IMR-90 (cell line): ENCODE measurements at regions of chr20 and their contacts with region 1.

Region 1: GRCh38 chr20:39326050-39326449 is 363.9 kb downstream of the DHX35 start:
- DNase-seq: no peak
- ATAC-seq: no peak
- H3K4me3 ChIP-seq: no peak overlapping the region
- H3K27ac ChIP-seq: no peak overlapping the region
- H3K4me1 ChIP-seq: no peaks in the 10 kb centered on the region
- H3K27me3 ChIP-seq: no peaks in the 10 kb centered on the region
- CTCF ChIP-seq: no peak
- POLR2A ChIP-seq: no peak
- RAD21 ChIP-seq: no peak

Region 2: DNA sequence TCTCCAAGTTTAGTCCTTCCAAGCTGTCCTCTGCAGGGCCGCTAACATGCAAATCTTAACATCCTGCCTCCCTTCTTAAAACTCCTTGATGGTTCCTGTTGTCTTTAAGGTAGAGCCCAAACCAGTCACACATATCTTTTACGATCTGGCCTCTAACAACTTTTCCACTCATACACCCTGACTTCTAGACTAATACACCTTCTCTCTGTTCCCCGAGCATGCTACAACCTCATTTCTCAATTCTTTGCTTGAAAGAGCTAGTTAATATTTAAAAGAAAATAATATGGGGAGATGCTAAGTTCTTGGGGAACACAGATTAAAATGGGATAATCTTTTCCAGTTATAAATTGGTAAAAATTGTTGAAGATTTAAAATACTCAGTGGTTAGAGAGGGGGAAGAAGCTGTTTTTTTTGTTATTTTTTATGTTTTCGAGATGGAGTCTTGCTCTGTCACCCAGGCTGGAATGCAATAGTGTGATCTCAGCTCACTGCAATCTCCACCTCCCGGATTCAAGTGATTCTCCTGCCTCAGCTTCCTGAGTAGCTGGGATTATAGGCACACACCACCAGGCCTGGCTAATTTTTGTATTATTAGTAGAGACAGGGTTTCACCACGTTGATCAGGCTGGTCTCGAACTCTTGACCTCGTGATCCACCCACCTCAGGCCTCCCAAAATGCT is 1112.3 kb after region 1 on chr20:
- CTCF ChIA-PET with region 1: interaction called, 11 read pairs
- POLR2A ChIA-PET with region 1: no interaction called
- dilution Hi-C with region 1: no loop called
- in situ Hi-C with region 1: no loop called
- intact Hi-C with region 1: no loop called
- DNase-seq: no peak
- ATAC-seq: no peak
- H3K4me3 ChIP-seq: no peak overlapping the region
- H3K27ac ChIP-seq: no peak overlapping the region
- H3K4me1 ChIP-seq: no peaks in the 10 kb centered on the region
- H3K27me3 ChIP-seq: no peaks in the 10 kb centered on the region; the same call in none of the 2 replicates
- CTCF ChIP-seq: no peak
- POLR2A ChIP-seq: no peak
- RAD21 ChIP-seq: no peak